ENCODE measurements at regions of chr17 and their contacts with region 1.

Region 1: DNA sequence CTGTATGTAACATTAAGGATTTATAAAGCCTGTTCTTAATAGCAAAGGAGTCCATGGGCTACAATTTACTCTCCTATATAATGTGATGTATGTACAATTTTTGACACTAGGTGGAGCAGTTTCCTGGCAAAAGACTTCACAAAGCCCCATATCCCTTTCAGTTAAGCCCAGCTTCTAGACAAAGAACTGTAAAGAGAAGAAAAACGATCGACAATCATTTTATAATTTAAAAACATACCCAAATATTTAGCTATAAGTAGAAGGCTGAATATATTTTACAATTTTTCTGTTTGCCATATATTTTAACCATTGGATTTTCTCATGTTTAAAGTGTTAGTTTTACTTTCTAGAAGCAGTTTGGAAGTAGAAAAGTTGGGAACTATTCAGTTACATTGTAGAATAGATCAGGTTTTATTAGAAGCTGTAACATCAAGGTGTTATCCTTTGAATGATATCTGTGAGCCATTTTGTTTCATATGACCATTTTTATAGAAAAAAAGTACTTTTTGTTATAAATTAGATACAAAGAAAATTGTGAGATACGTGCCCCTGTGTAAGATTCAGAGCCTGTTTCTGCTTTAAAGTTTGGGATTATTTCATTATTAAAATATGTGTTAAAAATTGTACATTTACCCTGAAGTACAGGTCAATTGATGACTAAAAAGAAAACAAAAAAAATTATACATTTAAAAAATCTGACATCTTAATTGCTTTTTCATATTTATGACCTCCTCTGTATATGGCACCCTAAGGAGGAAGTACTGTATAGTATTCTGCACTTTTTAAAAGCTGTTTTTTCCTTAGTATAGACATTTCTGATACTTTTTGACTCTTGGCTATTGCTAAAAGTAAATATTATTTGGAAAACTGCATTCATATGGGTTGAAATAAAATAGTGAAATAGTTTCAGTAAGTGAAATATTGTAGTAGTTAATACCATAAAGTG is 46.3 kb downstream of the VMP1 start:
- DNase-seq: peak; percentile 88
- ATAC-seq: peak; percentile 84
- H3K4me3 ChIP-seq: no peak overlapping the region; a peak in 1 of 6 replicates
- H3K27ac ChIP-seq: peak overlapping the region; percentile 82
- H3K4me1 ChIP-seq: peaks cover 82% of the 10 kb centered on the region
- H3K27me3 ChIP-seq: no peaks in the 10 kb centered on the region
- CTCF ChIP-seq: peak; percentile 85
- EP300 ChIP-seq: no peak
- POLR2A ChIP-seq: no peak
- RAD21 ChIP-seq: peak; percentile 86

Region 2: GRCh38 chr17:59707114-59707970 is 46.5 kb before region 1 on chr17 and contains the starts of genes PTRH2 and VMP1:
- CTCF ChIA-PET with region 1: no interaction called
- POLR2A ChIA-PET with region 1: interaction called, 14 read pairs
- in situ Hi-C with region 1: loop called (anchors 5 kb)
- intact Hi-C with region 1: no loop called
- DNase-seq: peak; percentile 100
- ATAC-seq: peak; percentile 96
- H3K4me3 ChIP-seq: peak within 1 kb of the TSS; percentile 83 to 98 (median 91)
- H3K27ac ChIP-seq: peak within 1 kb of the TSS; percentile 94
- H3K4me1 ChIP-seq: peaks cover 75% of the 10 kb centered on the region
- H3K27me3 ChIP-seq: peaks cover 0 to 5% of the 10 kb centered on the region in 2 experiments; a peak in 1 of 5 replicates
- CTCF ChIP-seq: no peak
- EP300 ChIP-seq: peak; percentile 1 to 28; a peak in 2 of 4 replicates
- POLR2A ChIP-seq: peak; percentile 91 to 99
- RAD21 ChIP-seq: no peak; the same call in 1 of the 2 replicates
- total RNA-seq, gene PTRH2: 48.7 and 67.7 TPM in 2 replicates
- total RNA-seq, gene VMP1: 80.3 and 186 TPM in 2 replicates

Region 3: GRCh38 chr17:59791603-59792457 is 38.0 kb after region 1 on chr17:
- CTCF ChIA-PET with region 1: no interaction called
- POLR2A ChIA-PET with region 1: interaction called, 124 read pairs
- in situ Hi-C with region 1: loop called (anchors 5 kb)
- intact Hi-C with region 1: no loop called
- DNase-seq: peak; percentile 85
- ATAC-seq: no peak
- H3K4me3 ChIP-seq: no peak overlapping the region
- H3K27ac ChIP-seq: peak overlapping the region; percentile 49
- H3K4me1 ChIP-seq: peaks cover 58% of the 10 kb centered on the region
- H3K27me3 ChIP-seq: no peaks in the 10 kb centered on the region
- CTCF ChIP-seq: no peak
- EP300 ChIP-seq: peak in 1 of 2 experiments; percentile 33; a peak in 2 of 4 replicates
- POLR2A ChIP-seq: no peak
- RAD21 ChIP-seq: no peak

Region 4: DNA sequence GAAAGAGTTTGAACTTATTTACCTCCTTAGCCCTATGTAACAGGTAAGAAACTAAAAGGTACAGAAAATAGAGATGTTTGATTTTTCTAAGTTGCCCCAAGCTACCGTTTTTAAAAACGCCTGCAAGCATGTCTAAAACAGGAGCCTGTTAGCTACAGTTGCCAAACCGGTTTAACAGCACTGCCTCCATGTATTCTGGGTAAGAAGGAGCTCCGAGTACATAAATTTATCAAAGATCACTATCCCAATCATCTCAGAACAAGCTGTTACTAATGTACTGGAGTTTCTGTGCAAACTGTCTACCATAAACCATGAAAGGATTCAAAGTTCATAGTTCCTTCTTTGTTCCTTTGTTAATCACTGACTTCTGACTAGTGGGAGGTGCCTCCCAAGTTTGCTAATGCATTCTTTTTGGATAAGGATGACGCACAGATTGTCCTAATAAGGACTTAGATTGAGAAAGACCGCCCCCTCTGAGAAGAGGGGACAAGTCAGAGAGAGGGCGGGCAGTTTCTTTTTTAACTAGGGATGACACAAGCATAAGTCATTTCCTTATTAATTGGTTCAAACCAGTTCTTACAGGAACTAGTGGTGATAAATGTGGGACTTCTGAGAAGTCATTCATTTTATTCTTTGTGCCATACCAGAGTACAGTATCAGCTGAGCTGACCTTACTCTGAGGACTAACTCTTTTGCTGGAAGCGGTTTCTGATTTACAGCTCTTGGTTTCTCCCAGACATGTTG is 83.7 kb after region 1 on chr17:
- CTCF ChIA-PET with region 1: interaction called, 24 read pairs
- POLR2A ChIA-PET with region 1: interaction called, 400 read pairs
- in situ Hi-C with region 1: loop called (anchors 5 kb)
- intact Hi-C with region 1: loop called (anchors 1 kb)
- DNase-seq: peak; percentile 100
- ATAC-seq: peak; percentile 86
- H3K4me3 ChIP-seq: peak overlapping the region; percentile 79 to 94 (median 80)
- H3K27ac ChIP-seq: peak overlapping the region; percentile 99
- H3K4me1 ChIP-seq: peaks cover 41% of the 10 kb centered on the region
- H3K27me3 ChIP-seq: peaks cover 0 to 5% of the 10 kb centered on the region in 2 experiments; a peak in 1 of 5 replicates
- CTCF ChIP-seq: no peak
- EP300 ChIP-seq: peak; percentile 90 to 96
- POLR2A ChIP-seq: peak; percentile 90 to 100
- RAD21 ChIP-seq: 0 out of 2 replicates have a peak, but pooled peaks have one; percentile 10

Region 5: GRCh38 chr17:59853168-59853918 is 99.5 kb after region 1 on chr17:
- CTCF ChIA-PET with region 1: interaction called, 39 read pairs
- POLR2A ChIA-PET with region 1: interaction called, 400 read pairs
- in situ Hi-C with region 1: no loop called
- intact Hi-C with region 1: loop called (anchors 1 kb)
- DNase-seq: peak; percentile 99
- ATAC-seq: peak; percentile 83
- H3K4me3 ChIP-seq: peak overlapping the region in 1 of 3 experiments; percentile 20; a peak in 1 of 6 replicates
- H3K27ac ChIP-seq: peak overlapping the region; percentile 94
- H3K4me1 ChIP-seq: peaks cover 95% of the 10 kb centered on the region
- H3K27me3 ChIP-seq: no peaks in the 10 kb centered on the region
- CTCF ChIP-seq: peak; percentile 95
- EP300 ChIP-seq: peak; percentile 66 to 94; a peak in 3 of 4 replicates
- POLR2A ChIP-seq: peak in 1 of 2 experiments; percentile 42; a peak in 2 of 4 replicates
- RAD21 ChIP-seq: peak; percentile 87

Region 6: GRCh38 chr17:60036796-60037612 is 283.2 kb after region 1 on chr17:
- CTCF ChIA-PET with region 1: no interaction called
- POLR2A ChIA-PET with region 1: no interaction called
- in situ Hi-C with region 1: loop called (anchors 10 kb)
- intact Hi-C with region 1: loop called (anchors 5 kb)
- DNase-seq: peak; percentile 83
- ATAC-seq: peak; percentile 97
- H3K4me3 ChIP-seq: peak overlapping the region; percentile 2 to 49 (median 23); a peak in 4 of 6 replicates
- H3K27ac ChIP-seq: peak overlapping the region; percentile 5
- H3K4me1 ChIP-seq: peaks cover 23% of the 10 kb centered on the region
- H3K27me3 ChIP-seq: no peaks in the 10 kb centered on the region; a peak in 1 of 5 replicates
- CTCF ChIP-seq: peak; percentile 98
- EP300 ChIP-seq: no peak
- POLR2A ChIP-seq: peak; percentile 43 to 82; a peak in 2 of 4 replicates
- RAD21 ChIP-seq: peak; percentile 59; the same call in 1 of the 2 replicates